B cell (primary cell): ENCODE measurements at regions of chrX and their contacts with region 1.

Region 1: DNA sequence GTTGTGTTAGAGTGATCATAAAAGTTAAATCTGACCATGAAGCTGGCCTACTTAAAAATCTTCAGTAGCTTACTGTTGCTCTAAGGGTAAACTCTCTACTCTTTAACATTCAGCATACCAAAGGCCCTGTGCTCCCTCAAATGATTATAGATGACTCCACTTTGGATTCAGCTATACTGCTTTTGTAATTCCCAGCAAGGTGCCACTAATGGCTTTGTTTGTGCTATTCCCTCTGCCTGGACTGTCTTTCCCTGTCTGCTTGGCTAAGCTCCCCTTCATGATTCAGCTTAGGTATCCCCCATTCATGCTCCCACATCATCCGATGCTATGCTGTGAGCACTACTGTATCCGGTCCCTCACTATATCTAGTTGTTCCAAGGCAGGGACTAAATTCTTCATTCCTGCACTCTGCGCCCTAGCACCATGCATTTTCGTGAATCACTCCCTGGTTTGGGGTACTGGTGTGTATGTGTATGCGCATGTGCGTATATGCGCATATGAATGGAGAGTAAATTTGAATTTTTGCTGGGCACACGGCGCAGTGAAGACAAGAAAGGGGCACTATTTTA is 453 bp upstream of the PBDC1 start:
- DNase-seq: no peak
- ATAC-seq: no peak
- H3K4me3 ChIP-seq: peak overlapping the region; percentile 59 to 71 (median 65)
- H3K4me3 Mint-ChIP-seq: peak overlapping the region; percentile 100
- H3K27ac ChIP-seq: peak overlapping the region; percentile 77 to 89
- H3K27ac Mint-ChIP-seq: peak overlapping the region; percentile 99
- H3K4me1 ChIP-seq: peaks cover 17% of the 10 kb centered on the region in 2 donors
- H3K4me1 Mint-ChIP-seq: peaks cover 43% of the 10 kb centered on the region
- H3K27me3 ChIP-seq: no peaks in the 10 kb centered on the region
- H3K27me3 Mint-ChIP-seq: no peaks in the 10 kb centered on the region
- CTCF ChIP-seq: no peak

Region 2: GRCh38 chrX:75156021-75156945 is 1016.1 kb before region 1 on chrX and contains the start of gene ABCB7:
- CTCF ChIA-PET with region 1: no interaction called
- POLR2A ChIA-PET with region 1: no interaction called
- intact Hi-C with region 1: loop called (anchors 5 kb)
- DNase-seq: peak; percentile 81
- ATAC-seq: peak; percentile 89
- H3K4me3 ChIP-seq: peak within 1 kb of the TSS; percentile 45 to 75 (median 70)
- H3K4me3 Mint-ChIP-seq: peak within 1 kb of the TSS; percentile 86
- H3K27ac ChIP-seq: peak within 1 kb of the TSS; percentile 78 to 82
- H3K27ac Mint-ChIP-seq: peak within 1 kb of the TSS; percentile 94
- H3K4me1 ChIP-seq: peaks cover 6 to 9% of the 10 kb centered on the region in 2 donors
- H3K4me1 Mint-ChIP-seq: peaks cover 37% of the 10 kb centered on the region
- H3K27me3 ChIP-seq: no peaks in the 10 kb centered on the region
- H3K27me3 Mint-ChIP-seq: no peaks in the 10 kb centered on the region
- CTCF ChIP-seq: no peak
- total RNA-seq, gene ABCB7: 34.7 and 39.1 TPM in 2 replicates

Region 3: DNA sequence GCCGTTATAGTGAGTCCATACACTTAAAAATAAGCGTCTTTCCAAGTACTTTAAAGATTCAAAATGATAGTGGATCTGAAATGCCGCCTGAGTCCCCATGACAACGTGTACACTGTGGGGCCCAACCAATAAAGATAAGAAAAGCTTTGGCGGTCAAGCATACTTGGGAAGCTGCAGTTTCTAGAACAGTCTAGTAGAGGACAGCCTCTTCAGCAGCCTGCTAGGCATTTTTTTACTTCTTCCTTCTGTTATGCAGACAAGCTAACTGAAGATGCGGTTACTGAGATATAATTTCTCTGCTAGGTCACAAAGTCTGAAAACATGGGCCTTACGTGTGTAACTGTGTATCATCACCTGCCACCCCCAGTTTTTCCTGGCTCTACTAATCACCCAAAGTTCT is 898.9 kb before region 1 on chrX:
- CTCF ChIA-PET with region 1: no interaction called
- POLR2A ChIA-PET with region 1: no interaction called
- intact Hi-C with region 1: loop called (anchors 2 kb)
- DNase-seq: no peak
- ATAC-seq: peak; percentile 7
- H3K4me3 ChIP-seq: peak overlapping the region in 4 of 5 experiments; percentile 68 to 96 (median 90)
- H3K4me3 Mint-ChIP-seq: peak overlapping the region; percentile 93
- H3K27ac ChIP-seq: peak overlapping the region; percentile 89 to 90
- H3K27ac Mint-ChIP-seq: peak overlapping the region; percentile 94
- H3K4me1 ChIP-seq: peaks cover 14 to 15% of the 10 kb centered on the region in 2 donors
- H3K4me1 Mint-ChIP-seq: peaks cover 46% of the 10 kb centered on the region
- H3K27me3 ChIP-seq: no peaks in the 10 kb centered on the region
- H3K27me3 Mint-ChIP-seq: no peaks in the 10 kb centered on the region
- CTCF ChIP-seq: no peak

Region 4: DNA sequence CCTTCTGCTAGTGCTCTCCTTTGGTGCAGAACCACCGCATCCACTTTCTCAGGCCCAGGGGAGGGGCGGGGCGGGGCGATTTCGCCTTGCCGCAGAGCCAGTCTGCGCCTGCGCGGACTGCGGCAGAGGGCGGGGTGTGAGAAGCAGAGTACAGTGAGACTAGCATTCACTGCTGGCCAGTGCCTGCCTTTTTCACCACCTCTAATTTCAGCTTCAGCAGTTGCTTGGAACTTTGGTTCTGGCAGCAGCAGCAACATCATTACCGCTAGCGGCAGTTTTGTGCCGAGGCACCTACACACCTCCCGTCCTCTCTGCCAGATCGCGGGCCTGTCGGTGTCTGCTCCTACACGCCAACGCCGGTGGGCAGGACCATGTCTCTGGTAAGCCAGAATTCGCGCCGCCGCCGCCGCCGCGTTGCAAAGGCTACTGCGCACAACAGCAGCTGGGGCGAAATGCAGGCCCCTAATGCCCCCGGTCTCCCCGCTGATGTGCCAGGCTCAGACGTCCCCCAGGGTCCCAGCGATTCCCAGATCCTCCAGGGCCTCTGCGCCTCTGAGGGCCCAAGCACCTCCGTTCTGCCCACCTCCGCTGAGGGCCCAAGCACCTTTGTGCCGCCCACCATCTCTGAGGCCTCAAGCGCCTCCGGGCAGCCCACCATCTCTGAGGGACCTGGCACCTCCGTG is 255.3 kb after region 1 on chrX and contains the start of gene MAGEE1:
- CTCF ChIA-PET with region 1: no interaction called
- POLR2A ChIA-PET with region 1: no interaction called
- intact Hi-C with region 1: loop called (anchors 5 kb)
- DNase-seq: peak; percentile 90
- ATAC-seq: peak; percentile 89
- H3K4me3 ChIP-seq: peak within 1 kb of the TSS; percentile 1 to 74 (median 73)
- H3K4me3 Mint-ChIP-seq: peak within 1 kb of the TSS; percentile 92
- H3K27ac ChIP-seq: peak within 1 kb of the TSS; percentile 49 to 60
- H3K27ac Mint-ChIP-seq: peak within 1 kb of the TSS; percentile 90
- H3K4me1 ChIP-seq: peaks cover 6 to 17% of the 10 kb centered on the region in 2 donors
- H3K4me1 Mint-ChIP-seq: peaks cover 20% of the 10 kb centered on the region
- H3K27me3 ChIP-seq: no peaks in the 10 kb centered on the region
- H3K27me3 Mint-ChIP-seq: peaks cover 2% of the 10 kb centered on the region
- CTCF ChIP-seq: no peak
- total RNA-seq, gene MAGEE1: 6.7 and 7.0 TPM in 2 replicates